GM12878 (cell line): ENCODE measurements at regions of chrX and their contacts with region 1.

Region 1: DNA sequence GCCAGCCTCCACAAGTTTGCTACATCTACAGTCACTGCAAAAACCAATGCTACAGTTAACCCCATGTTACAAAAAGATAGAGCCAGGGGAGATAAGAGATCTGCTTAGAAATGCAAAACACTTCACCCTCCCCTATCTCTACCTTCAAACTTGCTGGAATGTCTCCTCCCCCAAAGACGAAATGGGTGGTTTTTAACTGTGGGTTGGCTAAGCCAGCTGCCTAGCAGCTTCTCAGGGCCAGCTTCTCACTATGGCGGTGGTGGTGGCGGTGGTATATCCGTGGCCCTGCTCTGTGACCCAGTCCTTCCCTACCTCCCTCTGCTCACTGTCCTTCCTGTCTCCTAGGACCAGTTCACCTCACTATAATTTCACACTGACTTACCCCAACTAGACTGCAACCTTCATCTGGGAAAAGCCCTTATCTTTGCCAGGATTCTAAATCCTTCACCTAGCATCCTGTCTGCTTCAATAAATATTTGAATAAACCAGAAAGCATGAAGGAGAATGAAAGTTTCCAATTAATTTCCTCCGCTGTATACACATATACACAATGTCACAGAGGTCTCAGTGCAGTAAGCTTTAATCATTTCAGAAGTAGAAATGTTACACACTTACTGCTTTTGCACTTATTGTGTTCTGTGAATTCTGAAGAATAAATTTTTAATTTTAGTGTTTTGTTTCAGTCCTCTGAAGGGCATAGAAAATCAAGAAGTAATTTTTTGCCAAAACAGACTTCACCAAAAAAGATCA is 46.3 kb downstream of the SH3KBP1 start:
- DNase-seq: peak; percentile 64
- ATAC-seq: peak; percentile 74
- H3K4me3 ChIP-seq: no peak overlapping the region
- H3K27ac ChIP-seq: peak overlapping the region; percentile 81
- H3K4me1 ChIP-seq: peaks cover 30% of the 10 kb centered on the region
- H3K27me3 ChIP-seq: no peaks in the 10 kb centered on the region
- CTCF ChIP-seq: no peak
- EP300 ChIP-seq: 0 out of 4 replicates have a peak, but pooled peaks of 1 of the 2 experiments have one; percentile 10
- POLR2A ChIP-seq: peak; percentile 66
- RAD21 ChIP-seq: no peak

Region 2: DNA sequence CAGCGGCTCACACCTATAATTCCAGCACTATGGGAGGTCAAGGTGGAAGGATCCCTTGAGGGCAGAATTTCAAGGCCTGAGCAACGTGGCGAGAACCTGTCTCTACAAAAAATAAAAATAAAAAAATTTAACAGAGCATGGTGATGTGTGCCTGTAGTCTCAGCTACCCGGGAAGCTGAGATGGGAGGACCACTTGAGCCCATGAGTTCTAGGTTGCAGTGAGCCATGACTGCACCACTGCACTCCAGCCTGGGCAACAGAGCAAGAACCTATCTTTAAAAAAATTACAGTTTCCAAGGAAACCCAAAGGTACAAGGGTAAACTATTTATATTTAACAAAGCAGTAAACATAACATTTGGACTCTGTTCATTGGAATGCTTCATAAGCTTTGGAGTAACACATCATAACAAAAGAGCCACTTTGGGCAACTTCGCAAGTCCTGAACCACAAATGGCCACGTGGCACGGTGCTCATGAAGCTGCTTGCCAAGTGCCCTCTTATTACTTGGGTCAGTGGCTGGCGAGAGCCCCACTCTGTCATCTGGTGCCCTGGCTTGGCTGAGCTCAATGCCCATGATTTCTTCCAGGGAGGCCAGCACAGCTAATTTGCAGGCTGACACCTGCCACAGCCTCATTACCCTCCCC is 119.2 kb before region 1 on chrX:
- CTCF ChIA-PET with region 1: no interaction called
- POLR2A ChIA-PET with region 1: no interaction called
- RAD21 ChIA-PET with region 1: no interaction called
- SMC1A ChIA-PET with region 1: no interaction called
- in situ Hi-C with region 1: no loop called
- intact Hi-C with region 1: no loop called
- DNase-seq: no peak
- ATAC-seq: peak; percentile 51
- H3K4me3 ChIP-seq: no peak overlapping the region
- H3K27ac ChIP-seq: no peak overlapping the region
- H3K4me1 ChIP-seq: no peaks in the 10 kb centered on the region; the same call in 1 of the 2 replicates
- H3K27me3 ChIP-seq: no peaks in the 10 kb centered on the region
- CTCF ChIP-seq: no peak
- EP300 ChIP-seq: no peak
- POLR2A ChIP-seq: no peak
- RAD21 ChIP-seq: no peak

Region 3: DNA sequence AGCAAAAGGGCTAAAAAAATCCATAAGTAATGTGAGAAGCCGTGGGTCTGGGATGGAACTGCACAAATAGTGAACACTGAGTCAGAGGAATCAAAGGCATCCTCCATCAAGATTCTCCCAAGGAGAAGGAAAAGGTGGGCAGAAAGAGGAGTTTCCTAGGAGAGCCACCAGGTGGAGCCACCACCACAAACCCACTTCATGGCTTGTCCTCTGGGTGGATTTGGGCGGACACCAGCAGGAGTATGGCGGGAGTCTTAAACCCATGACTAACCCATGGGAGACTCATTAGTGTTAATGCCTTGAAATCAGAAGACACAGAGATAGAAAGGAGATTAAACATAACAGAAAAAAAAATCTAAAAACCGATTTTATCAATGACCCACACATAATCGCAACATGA is 101.4 kb before region 1 on chrX:
- CTCF ChIA-PET with region 1: interaction called, 3 read pairs
- POLR2A ChIA-PET with region 1: interaction called, 4 read pairs
- RAD21 ChIA-PET with region 1: interaction called, 21 read pairs
- SMC1A ChIA-PET with region 1: interaction called, 9 read pairs
- in situ Hi-C with region 1: no loop called
- intact Hi-C with region 1: no loop called
- DNase-seq: no peak
- ATAC-seq: peak; percentile 18; the same call in 2 of the 3 replicates
- H3K4me3 ChIP-seq: no peak overlapping the region
- H3K27ac ChIP-seq: no peak overlapping the region
- H3K4me1 ChIP-seq: peaks cover 28% of the 10 kb centered on the region
- H3K27me3 ChIP-seq: no peaks in the 10 kb centered on the region
- CTCF ChIP-seq: peak; percentile 56 to 72 (median 71)
- EP300 ChIP-seq: no peak
- POLR2A ChIP-seq: no peak
- RAD21 ChIP-seq: peak; percentile 73

Region 4: DNA sequence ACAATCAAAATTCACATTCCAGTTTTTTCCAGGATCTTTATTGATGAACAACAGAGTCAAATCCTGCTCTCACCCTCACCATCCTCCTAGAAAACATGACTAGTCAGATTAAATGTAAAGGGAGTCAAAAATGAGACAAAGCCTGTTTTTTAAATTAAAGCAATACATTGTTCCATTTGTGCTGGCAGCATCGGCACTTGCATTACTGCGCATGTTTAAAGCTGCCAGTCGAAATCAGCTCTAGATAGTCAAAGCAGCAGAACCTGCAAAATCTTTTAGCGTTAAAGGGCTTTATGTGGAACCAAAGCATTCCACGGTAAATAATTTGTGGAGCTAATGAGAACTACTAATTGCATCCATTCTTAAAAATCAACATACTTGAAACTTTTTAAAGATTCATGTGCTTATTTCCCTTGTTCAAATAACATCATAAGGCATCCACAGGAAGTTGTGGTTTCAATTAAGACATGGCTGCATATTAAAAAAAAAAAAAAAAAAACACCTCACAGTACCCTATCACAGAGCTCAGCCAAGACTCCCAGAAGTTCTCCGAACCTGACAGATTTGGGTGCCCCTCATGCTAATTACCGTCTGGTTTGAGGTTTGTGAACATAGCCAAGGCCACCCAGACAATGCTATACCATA is 35.9 kb before region 1 on chrX:
- CTCF ChIA-PET with region 1: no interaction called
- POLR2A ChIA-PET with region 1: interaction called, 15 read pairs
- RAD21 ChIA-PET with region 1: interaction called, 15 read pairs
- SMC1A ChIA-PET with region 1: interaction called, 27 read pairs
- in situ Hi-C with region 1: no loop called
- intact Hi-C with region 1: loop called (anchors 5 kb)
- DNase-seq: no peak
- ATAC-seq: no peak; the same call in 2 of the 3 replicates
- H3K4me3 ChIP-seq: peak overlapping the region; percentile 12; the same call in 1 of the 2 replicates
- H3K27ac ChIP-seq: peak overlapping the region; percentile 48
- H3K4me1 ChIP-seq: peaks cover 32% of the 10 kb centered on the region
- H3K27me3 ChIP-seq: no peaks in the 10 kb centered on the region
- CTCF ChIP-seq: no peak
- EP300 ChIP-seq: no peak
- POLR2A ChIP-seq: no peak
- RAD21 ChIP-seq: no peak

Region 5: GRCh38 chrX:19824603-19825002 is 16.5 kb before region 1 on chrX:
- CTCF ChIA-PET with region 1: interaction called, 6 read pairs
- POLR2A ChIA-PET with region 1: interaction called, 3 read pairs
- RAD21 ChIA-PET with region 1: interaction called, 5 read pairs
- SMC1A ChIA-PET with region 1: interaction called, 29 read pairs
- in situ Hi-C with region 1: no loop called
- intact Hi-C with region 1: no loop called
- DNase-seq: no peak
- ATAC-seq: peak; percentile 57
- H3K4me3 ChIP-seq: no peak overlapping the region
- H3K27ac ChIP-seq: no peak overlapping the region
- H3K4me1 ChIP-seq: no peaks in the 10 kb centered on the region
- H3K27me3 ChIP-seq: no peaks in the 10 kb centered on the region; a peak in 1 of 4 replicates
- CTCF ChIP-seq: no peak
- EP300 ChIP-seq: no peak
- POLR2A ChIP-seq: no peak
- RAD21 ChIP-seq: no peak

Region 6: GRCh38 chrX:19869193-19869592 is 28.1 kb after region 1 on chrX:
- CTCF ChIA-PET with region 1: interaction called, 3 read pairs
- POLR2A ChIA-PET with region 1: interaction called, 6 read pairs
- RAD21 ChIA-PET with region 1: interaction called, 35 read pairs
- SMC1A ChIA-PET with region 1: interaction called, 52 read pairs
- in situ Hi-C with region 1: no loop called
- intact Hi-C with region 1: no loop called
- DNase-seq: no peak
- ATAC-seq: no peak
- H3K4me3 ChIP-seq: no peak overlapping the region
- H3K27ac ChIP-seq: peak overlapping the region; percentile 86
- H3K4me1 ChIP-seq: peaks cover 62% of the 10 kb centered on the region
- H3K27me3 ChIP-seq: no peaks in the 10 kb centered on the region
- CTCF ChIP-seq: no peak
- EP300 ChIP-seq: no peak
- POLR2A ChIP-seq: no peak
- RAD21 ChIP-seq: no peak

Region 7: DNA sequence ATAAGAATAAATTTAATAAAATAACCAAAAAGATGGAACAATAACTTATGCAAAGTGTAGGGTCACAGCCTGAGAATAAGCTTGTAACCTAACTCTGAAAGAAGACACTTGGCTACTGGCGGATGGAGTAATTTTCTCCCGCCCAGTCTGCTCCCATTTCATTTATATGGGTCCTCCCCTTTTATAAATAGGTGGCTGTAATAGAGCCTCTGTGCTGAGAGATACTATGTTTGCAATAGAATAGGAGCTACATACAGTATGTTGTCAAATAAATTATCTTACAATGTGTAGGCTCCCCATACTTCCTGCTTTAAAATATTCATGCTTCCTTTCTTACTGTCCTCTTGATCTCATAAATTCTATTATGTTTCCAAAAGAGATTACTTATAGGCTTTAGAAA is 453.9 kb after region 1 on chrX:
- CTCF ChIA-PET with region 1: no interaction called
- POLR2A ChIA-PET with region 1: no interaction called
- RAD21 ChIA-PET with region 1: no interaction called
- SMC1A ChIA-PET with region 1: no interaction called
- in situ Hi-C with region 1: no loop called
- intact Hi-C with region 1: no loop called
- DNase-seq: no peak
- ATAC-seq: no peak
- H3K4me3 ChIP-seq: no peak overlapping the region
- H3K27ac ChIP-seq: no peak overlapping the region
- H3K4me1 ChIP-seq: no peaks in the 10 kb centered on the region
- H3K27me3 ChIP-seq: peaks cover 0 to 3% of the 10 kb centered on the region in 2 experiments; a peak in 1 of 4 replicates
- CTCF ChIP-seq: no peak
- EP300 ChIP-seq: no peak
- POLR2A ChIP-seq: no peak
- RAD21 ChIP-seq: no peak